ENCODE measurements at regions of chr6 and their contacts with region 1.

Region 1: DNA sequence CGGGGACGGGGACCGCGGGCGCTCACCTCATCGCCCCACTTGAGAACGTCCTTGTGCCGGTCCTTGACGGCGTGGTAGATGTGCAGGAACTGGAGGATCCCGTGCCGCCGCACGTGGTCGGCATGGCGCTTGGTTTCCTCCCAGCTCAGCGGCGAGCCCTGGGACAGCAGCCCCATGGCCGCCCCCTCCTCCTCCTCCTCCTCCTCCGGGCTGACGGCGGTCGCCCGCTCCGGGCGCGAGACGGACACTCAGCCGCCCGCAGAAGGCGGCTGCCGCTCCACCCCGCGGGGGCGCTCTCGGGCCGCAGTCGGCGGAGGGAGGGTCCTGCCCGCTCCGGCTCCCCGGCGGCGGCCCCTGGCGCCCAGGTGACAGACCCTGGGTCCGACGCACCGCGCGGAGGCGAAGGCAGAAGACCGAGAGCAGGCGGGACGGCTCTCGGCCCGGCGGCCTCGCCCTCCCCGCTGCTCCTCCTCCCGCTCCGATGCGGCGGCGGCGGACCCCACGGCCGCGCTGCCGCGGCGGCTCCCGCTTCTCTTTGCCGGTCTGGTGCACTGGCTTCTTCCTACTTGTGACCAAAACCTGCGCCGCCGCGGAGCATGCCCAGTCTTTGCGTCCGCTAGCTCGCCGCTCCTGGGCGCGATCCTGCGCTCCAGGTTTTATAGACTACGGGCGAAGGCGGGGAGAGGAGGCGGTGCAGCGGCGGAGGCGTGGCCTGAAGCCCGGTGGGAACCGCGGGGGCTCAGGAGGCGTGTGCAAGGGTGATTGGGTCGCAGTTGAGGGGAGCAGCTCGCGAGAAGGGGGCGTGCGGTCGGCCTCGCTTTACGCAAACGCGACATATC is at the start of gene GCLC:
- DNase-seq: peak; percentile 94
- H3K4me3 Mint-ChIP-seq: peak within 1 kb of the TSS; percentile 94
- H3K27ac Mint-ChIP-seq: peak within 1 kb of the TSS; percentile 86
- H3K4me1 Mint-ChIP-seq: peaks cover 62% of the 10 kb centered on the region
- H3K27me3 Mint-ChIP-seq: no peaks in the 10 kb centered on the region
- total RNA-seq, gene GCLC: 27.2 to 33.3 TPM

Region 2: GRCh38 chr6:53064726-53065215 is 479.9 kb before region 1 on chr6:
- CTCF ChIA-PET with region 1: interaction called, 3 read pairs
- POLR2A ChIA-PET with region 1: no interaction called
- intact Hi-C with region 1: loop called (anchors 5 kb)
- DNase-seq: peak; percentile 98
- H3K4me3 Mint-ChIP-seq: peak overlapping the region; percentile 100
- H3K27ac Mint-ChIP-seq: peak overlapping the region; percentile 97
- H3K4me1 Mint-ChIP-seq: peaks cover 52% of the 10 kb centered on the region
- H3K27me3 Mint-ChIP-seq: no peaks in the 10 kb centered on the region

Region 3: GRCh38 chr6:53359072-53359842 is 185.4 kb before region 1 on chr6:
- CTCF ChIA-PET with region 1: no interaction called
- POLR2A ChIA-PET with region 1: no interaction called
- intact Hi-C with region 1: loop called (anchors 2 kb)
- DNase-seq: peak; percentile 95
- H3K4me3 Mint-ChIP-seq: peak overlapping the region; percentile 92
- H3K27ac Mint-ChIP-seq: peak overlapping the region; percentile 98
- H3K4me1 Mint-ChIP-seq: peaks cover 39% of the 10 kb centered on the region
- H3K27me3 Mint-ChIP-seq: no peaks in the 10 kb centered on the region

Region 4: DNA sequence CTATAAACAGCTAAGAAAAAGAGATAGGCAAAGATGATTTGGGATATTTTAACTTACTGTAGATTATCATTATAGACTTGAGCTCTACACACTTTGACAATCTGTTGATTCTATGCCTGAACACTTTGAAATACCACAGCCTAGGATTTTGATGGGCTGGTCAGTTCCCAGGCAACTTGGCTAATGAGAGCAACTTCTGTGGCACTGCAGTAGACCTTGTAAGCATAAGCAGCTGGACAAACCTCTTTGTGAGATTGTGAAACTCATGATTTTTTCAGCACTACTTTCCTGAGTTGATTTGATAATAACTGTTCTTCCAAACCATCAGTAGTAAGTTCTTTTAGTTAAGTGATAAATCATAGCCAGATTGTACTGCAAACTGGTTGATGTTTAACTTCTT is 168.8 kb before region 1 on chr6:
- CTCF ChIA-PET with region 1: no interaction called
- POLR2A ChIA-PET with region 1: no interaction called
- intact Hi-C with region 1: no loop called
- DNase-seq: no peak
- H3K4me3 Mint-ChIP-seq: no peak overlapping the region
- H3K27ac Mint-ChIP-seq: no peak overlapping the region
- H3K4me1 Mint-ChIP-seq: no peaks in the 10 kb centered on the region
- H3K27me3 Mint-ChIP-seq: no peaks in the 10 kb centered on the region

Region 5: GRCh38 chr6:53417140-53417539 is 127.5 kb before region 1 on chr6:
- CTCF ChIA-PET with region 1: no interaction called
- POLR2A ChIA-PET with region 1: no interaction called
- intact Hi-C with region 1: no loop called
- DNase-seq: no peak
- H3K4me3 Mint-ChIP-seq: no peak overlapping the region
- H3K27ac Mint-ChIP-seq: no peak overlapping the region
- H3K4me1 Mint-ChIP-seq: no peaks in the 10 kb centered on the region
- H3K27me3 Mint-ChIP-seq: no peaks in the 10 kb centered on the region

Region 6: DNA sequence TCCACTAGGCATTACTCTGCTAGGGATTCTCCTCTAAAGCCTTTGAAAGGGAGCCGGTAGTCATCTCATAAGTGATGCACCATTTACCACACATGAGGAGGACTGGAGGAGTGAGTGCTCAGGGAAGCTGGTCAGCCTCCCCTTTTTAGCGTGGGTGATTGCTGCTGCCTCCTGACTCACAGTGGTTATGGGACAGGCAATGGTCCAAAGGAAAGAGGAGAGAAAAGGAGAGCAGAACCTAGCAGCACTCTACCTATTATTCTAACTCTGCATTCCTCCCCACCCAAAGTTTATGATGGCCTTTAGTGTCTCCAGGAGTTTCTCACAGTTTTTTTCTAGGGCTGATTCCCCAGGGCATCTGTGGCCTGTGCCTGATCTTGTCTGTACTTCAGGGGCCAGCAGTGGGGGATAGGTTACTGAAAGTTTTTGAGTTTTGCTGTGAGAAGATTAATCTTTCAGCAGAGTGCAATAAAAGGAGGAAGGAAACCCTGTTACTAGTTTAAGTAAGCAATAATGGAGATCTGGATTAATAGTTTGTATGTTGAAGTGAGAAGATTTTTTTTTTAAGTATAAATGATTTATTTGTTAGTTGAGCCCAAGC is 36.6 kb after region 1 on chr6:
- CTCF ChIA-PET with region 1: no interaction called
- POLR2A ChIA-PET with region 1: interaction called, 6 read pairs
- intact Hi-C with region 1: loop called (anchors 1 kb)
- DNase-seq: peak; percentile 22
- H3K4me3 Mint-ChIP-seq: no peak overlapping the region
- H3K27ac Mint-ChIP-seq: peak overlapping the region; percentile 31
- H3K4me1 Mint-ChIP-seq: peaks cover 46% of the 10 kb centered on the region
- H3K27me3 Mint-ChIP-seq: no peaks in the 10 kb centered on the region

Region 7: GRCh38 chr6:53651764-53652401 is 107.2 kb after region 1 on chr6:
- CTCF ChIA-PET with region 1: interaction called, 32 read pairs
- POLR2A ChIA-PET with region 1: interaction called, 15 read pairs
- intact Hi-C with region 1: loop called (anchors 1 kb)
- DNase-seq: peak; percentile 86
- H3K4me3 Mint-ChIP-seq: peak overlapping the region; percentile 85
- H3K27ac Mint-ChIP-seq: peak overlapping the region; percentile 80
- H3K4me1 Mint-ChIP-seq: peaks cover 31% of the 10 kb centered on the region
- H3K27me3 Mint-ChIP-seq: no peaks in the 10 kb centered on the region

Region 8: DNA sequence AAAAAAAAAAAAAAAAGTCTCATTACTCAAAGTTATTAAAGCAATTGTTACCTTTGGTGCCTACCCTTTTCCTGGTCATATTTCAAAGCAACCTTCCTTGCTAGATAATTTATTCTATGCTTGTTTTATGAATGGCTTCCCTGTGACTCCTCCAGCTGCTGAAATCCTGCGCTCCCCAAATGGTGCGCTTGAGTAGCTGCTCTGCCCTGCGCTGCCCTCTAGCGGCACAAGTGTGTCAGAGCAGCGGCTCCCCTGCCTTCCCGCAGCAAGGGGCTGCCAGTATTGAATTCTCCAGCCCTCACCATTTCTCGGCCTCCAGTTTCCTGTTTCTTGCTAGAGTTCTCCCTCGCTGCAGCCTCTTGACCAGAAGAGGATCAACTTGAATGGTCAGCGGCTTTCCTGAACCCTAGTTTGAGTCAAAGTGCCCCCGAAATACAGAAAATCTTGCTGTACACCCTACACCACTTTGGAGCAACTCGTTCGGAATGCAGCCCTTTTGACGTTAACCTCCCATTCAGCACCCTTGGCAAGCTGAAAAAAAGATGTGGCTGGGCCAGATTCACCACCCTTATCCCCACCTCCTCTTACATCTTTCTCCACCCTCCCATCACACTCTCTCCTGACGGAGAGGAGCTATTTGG is 181.2 kb after region 1 on chr6:
- CTCF ChIA-PET with region 1: interaction called, 7 read pairs
- POLR2A ChIA-PET with region 1: interaction called, 3 read pairs
- intact Hi-C with region 1: loop called (anchors 2 kb)
- DNase-seq: peak; percentile 82
- H3K4me3 Mint-ChIP-seq: no peak overlapping the region
- H3K27ac Mint-ChIP-seq: no peak overlapping the region
- H3K4me1 Mint-ChIP-seq: peaks cover 8% of the 10 kb centered on the region
- H3K27me3 Mint-ChIP-seq: peaks cover 19% of the 10 kb centered on the region